Right ventricle myocardium inferior (tissue), 1 donor: ENCODE measurements at regions of chr20 and their contacts with region 1.

Region 1: DNA sequence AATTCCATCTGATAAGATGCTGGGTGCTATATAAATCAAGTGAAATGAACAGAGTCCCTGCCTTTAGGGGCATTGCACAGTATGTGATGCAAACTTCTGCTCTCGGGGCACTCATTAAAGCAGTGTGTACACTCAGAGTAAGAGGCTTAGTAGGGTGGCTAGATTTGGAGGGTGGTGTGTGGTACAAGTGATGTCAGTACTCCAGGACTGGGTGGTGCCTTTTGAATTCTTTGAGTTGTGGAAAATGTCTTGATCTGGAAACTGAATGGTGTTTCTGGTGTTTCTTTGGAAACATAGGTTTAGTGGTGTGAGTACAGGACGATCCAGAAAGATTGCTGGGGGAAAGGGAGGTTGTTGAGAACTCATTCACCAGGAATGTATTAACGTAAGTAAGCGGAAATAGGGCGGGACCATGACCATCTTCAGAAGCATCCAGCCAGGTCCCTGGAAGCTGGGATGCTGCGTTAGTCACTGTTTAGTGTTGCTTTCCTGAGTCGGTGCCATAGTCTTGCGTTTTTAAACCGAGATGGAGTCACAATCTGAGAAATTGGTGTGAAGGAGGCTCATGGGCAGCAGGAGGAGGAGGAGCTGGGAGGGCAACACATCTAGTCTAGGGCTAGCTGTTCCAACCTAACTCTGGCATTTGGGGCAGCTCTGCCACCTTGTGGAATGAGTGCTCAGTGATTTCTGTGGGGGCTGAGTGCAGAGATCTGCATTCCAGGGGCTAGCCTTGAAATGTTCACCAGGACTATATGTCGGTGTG is 70.3 kb downstream of the SCAND1 start:
- DNase-seq: peak; percentile 73
- ATAC-seq: peak; percentile 78

Region 2: DNA sequence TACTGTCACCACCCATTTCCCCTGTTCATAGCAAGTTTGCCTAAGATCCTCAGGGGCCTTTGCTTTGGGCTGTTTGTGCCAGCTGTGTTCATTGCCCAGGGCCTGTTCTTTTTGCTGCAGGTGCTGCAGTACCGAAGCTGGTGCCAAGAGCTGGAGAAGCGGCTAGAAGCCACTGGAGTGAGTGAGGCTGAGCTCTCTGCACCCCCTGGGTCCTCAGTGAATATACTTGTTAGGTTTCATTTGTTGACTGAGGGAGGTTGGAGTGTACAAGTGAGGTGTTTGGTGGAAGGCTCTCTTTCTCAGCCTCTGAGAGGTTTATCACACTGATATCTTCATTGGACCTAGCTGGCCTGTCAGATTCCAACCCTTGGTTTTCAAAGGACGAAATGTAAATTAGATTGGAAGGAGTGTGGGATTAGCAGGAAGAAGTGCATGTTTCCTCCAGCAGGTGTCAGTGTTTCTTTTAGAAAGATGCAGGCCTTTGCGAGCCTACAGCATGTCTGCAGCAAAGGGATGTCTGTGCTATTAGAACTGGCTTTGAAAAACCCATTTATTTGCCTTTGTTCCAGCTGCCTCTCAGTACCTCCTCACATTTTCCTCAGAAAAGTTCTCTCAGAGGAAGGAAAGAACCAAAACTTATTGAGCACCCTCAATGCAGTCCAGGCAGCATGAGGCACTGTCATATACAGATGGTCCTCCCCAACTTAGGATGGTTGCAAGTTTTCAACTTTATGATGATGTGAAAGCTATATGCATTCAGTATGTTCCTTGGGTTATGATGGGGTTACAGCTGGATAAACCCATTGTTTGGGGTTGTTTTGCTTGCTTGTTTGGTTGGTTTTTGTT is 420.3 kb before region 1 on chr20:
- intact Hi-C with region 1: loop called (anchors 10 kb)
- DNase-seq: no peak
- ATAC-seq: peak; percentile 73

Region 3: DNA sequence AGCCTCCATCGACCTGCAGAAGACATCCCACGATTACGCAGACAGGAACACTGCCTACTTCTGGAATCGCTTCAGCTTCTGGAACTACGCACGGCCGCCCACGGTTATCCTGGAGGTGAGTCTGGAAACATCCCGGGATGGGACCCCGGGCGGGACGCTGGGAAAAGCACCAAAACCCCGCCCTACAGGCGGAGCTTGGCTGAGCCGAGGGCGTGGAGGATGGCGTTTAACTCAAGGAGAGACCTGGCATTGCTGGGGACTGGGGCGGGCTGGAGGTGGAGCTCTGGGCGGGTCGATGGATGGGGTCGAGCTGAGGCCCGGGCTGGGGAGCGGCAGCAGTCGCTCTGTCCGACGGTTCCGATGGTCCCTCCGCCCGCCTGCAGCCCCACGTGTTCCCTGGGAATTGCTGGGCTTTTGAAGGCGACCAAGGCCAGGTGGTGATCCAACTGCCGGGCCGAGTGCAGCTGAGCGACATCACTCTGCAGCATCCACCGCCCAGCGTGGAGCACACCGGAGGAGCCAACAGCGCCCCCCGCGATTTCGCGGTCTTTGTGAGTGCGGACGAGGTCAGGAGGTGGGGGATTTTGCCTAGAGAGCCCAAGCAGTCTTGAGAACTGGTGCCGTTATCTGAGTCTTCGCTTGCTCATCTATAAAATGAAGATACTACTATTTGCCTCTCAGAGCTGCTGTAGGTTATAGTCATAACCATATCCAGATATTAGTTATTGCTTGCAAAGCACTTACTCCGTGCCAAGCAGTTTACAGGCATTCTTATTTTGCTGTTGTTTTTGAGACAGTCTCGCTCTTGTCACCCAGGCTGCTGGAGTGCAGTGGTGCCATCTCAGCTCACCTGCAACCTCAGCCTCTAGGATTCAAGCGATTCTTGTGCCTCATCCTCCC is 264.5 kb before region 1 on chr20:
- intact Hi-C with region 1: loop called (anchors 10 kb)
- DNase-seq: peak; percentile 85
- ATAC-seq: peak; percentile 41